ENCODE measurements at regions of chr19 and their contacts with region 1.

Region 1: DNA sequence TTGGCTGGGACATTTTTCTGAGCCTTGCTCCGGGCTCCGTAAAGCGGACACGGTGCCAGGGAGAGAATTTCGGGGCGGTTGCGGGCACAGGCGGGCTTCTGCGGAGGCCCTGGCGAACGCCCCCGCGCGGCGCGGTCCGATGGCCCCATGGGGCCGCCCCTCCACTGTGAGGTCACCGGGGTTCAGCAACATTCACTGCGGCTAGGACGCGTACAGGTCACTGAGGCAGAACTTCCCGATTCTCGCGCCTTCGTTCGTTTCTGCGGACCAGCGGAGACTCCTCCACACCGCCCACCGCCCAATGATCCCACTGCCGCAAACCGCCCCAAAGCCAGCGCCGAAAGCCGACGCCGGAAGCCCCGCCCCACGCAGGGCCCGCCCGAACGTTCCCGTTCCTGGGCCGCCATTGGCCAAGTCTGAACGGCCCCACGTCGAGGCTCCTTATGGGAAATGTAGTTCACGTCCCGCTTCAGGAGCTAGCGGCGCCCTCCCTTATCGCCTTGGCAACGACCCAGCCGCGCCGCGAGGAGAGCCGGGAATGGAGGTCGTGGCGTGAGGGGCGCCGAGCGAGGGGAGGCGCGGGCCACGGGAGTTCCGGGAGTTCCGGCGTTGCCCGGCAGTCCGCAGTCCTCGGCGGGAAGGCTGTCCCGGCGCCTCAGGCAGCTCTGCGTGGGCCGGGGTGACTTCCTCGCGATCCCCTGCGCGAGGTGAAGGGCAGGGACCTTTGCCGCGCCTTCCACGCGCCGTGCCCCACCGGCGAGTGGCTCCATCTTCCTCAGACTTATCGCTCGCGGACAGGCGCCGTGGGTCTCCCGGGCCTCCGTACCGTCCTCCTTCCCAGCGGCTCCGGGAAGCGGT is at the start of gene ZNF584:
- DNase-seq: peak; percentile 85 to 96 (median 92)
- ATAC-seq: peak; percentile 98
- H3K4me3 ChIP-seq: peak within 1 kb of the TSS; percentile 92
- H3K4me3 Mint-ChIP-seq: peak within 1 kb of the TSS; percentile 99
- H3K27ac ChIP-seq: peak within 1 kb of the TSS; percentile 70 to 77
- H3K27ac Mint-ChIP-seq: peak within 1 kb of the TSS; percentile 94
- H3K4me1 ChIP-seq: peaks cover 27% of the 10 kb centered on the region
- H3K4me1 Mint-ChIP-seq: peaks cover 39% of the 10 kb centered on the region
- H3K27me3 ChIP-seq: no peaks in the 10 kb centered on the region
- H3K27me3 Mint-ChIP-seq: no peaks in the 10 kb centered on the region
- CTCF ChIP-seq: no peak
- total RNA-seq, gene ZNF584: 1.7 to 1.8 TPM

Region 2: GRCh38 chr19:58362272-58362994 is 45.9 kb before region 1 on chr19 and contains the start of gene ZNF497:
- CTCF ChIA-PET with region 1: no interaction called
- POLR2A ChIA-PET with region 1: interaction called, 15 read pairs
- intact Hi-C with region 1: no loop called
- DNase-seq: peak; percentile 92 to 99 (median 97)
- ATAC-seq: peak; percentile 90
- H3K4me3 ChIP-seq: peak within 1 kb of the TSS; percentile 84
- H3K4me3 Mint-ChIP-seq: peak within 1 kb of the TSS; percentile 94
- H3K27ac ChIP-seq: peak within 1 kb of the TSS; percentile 58 to 69
- H3K27ac Mint-ChIP-seq: peak within 1 kb of the TSS; percentile 84
- H3K4me1 ChIP-seq: peaks cover 22% of the 10 kb centered on the region
- H3K4me1 Mint-ChIP-seq: peaks cover 12% of the 10 kb centered on the region
- H3K27me3 ChIP-seq: no peaks in the 10 kb centered on the region
- H3K27me3 Mint-ChIP-seq: no peaks in the 10 kb centered on the region
- CTCF ChIP-seq: no peak
- total RNA-seq, gene ZNF497: 0.28 to 0.55 TPM

Region 3: GRCh38 chr19:58380722-58381466 is 27.5 kb before region 1 on chr19 and contains the start of gene ZNF837:
- CTCF ChIA-PET with region 1: no interaction called
- POLR2A ChIA-PET with region 1: interaction called, 7 read pairs
- intact Hi-C with region 1: loop called in 1 of 2 experiments (anchors 1 kb)
- DNase-seq: peak; percentile 93 to 100 (median 97)
- ATAC-seq: peak; percentile 83
- H3K4me3 ChIP-seq: peak within 1 kb of the TSS; percentile 82
- H3K4me3 Mint-ChIP-seq: peak within 1 kb of the TSS; percentile 92
- H3K27ac ChIP-seq: peak within 1 kb of the TSS; percentile 81 to 92
- H3K27ac Mint-ChIP-seq: peak within 1 kb of the TSS; percentile 86
- H3K4me1 ChIP-seq: peaks cover 43% of the 10 kb centered on the region
- H3K4me1 Mint-ChIP-seq: peaks cover 33% of the 10 kb centered on the region
- H3K27me3 ChIP-seq: no peaks in the 10 kb centered on the region
- H3K27me3 Mint-ChIP-seq: no peaks in the 10 kb centered on the region
- CTCF ChIP-seq: no peak
- total RNA-seq, gene ZNF837: 0.71 to 1.0 TPM

Region 4: GRCh38 chr19:58386576-58387337 is 21.6 kb before region 1 on chr19 and contains the start of gene RPS5:
- CTCF ChIA-PET with region 1: no interaction called
- POLR2A ChIA-PET with region 1: interaction called, 7 read pairs
- intact Hi-C with region 1: loop called (anchors 1 kb)
- DNase-seq: peak; percentile 90 to 100 (median 95)
- ATAC-seq: peak; percentile 90
- H3K4me3 ChIP-seq: peak within 1 kb of the TSS; percentile 79
- H3K4me3 Mint-ChIP-seq: peak within 1 kb of the TSS; percentile 99
- H3K27ac ChIP-seq: peak within 1 kb of the TSS; percentile 93 to 97
- H3K27ac Mint-ChIP-seq: peak within 1 kb of the TSS; percentile 98
- H3K4me1 ChIP-seq: peaks cover 53% of the 10 kb centered on the region
- H3K4me1 Mint-ChIP-seq: peaks cover 47% of the 10 kb centered on the region
- H3K27me3 ChIP-seq: no peaks in the 10 kb centered on the region
- H3K27me3 Mint-ChIP-seq: no peaks in the 10 kb centered on the region
- CTCF ChIP-seq: no peak
- total RNA-seq, gene RPS5: 1,619 to 1,646 TPM

Region 5: DNA sequence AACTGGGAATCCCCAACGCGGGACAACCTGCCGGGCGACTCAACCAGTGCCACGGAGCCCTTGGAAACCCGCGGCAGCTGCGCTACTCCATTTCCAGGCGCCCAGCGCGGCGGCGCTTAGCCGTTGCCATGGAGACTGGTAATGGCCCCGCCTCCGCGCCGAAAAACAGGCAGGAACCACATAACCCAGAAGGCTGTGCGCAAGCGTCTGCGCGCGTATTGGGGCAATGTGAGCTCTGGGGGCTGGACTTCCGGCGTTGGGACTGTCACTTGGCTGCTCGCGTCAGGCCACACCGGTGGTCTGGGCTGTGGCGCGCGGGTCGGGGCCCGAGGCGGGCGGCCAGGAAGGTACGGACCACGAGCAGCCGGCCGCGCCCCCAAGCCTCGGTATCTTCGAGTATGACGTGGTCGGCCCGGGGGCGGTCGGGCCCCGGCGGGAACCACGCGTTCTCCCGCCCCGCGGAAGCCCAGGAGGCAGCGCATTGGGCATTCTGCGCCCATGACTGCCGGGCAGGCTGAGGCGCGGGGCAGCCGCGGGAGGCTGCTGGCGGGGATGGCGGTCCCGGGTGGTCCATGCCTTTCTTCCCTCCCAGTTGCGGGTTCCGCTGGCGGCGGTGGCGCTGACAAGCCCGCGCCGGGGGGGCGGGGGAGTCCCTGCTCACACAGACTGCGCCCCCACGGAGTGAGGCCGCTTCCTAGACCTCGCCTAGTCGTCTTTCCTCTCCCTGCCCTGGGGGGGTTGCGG is 43.1 kb after region 1 on chr19 and contains the start of gene ZNF324B:
- CTCF ChIA-PET with region 1: no interaction called
- POLR2A ChIA-PET with region 1: no interaction called
- intact Hi-C with region 1: loop called (anchors 1 to 2 kb)
- DNase-seq: peak; percentile 92 to 98 (median 96)
- ATAC-seq: peak; percentile 97
- H3K4me3 ChIP-seq: peak within 1 kb of the TSS; percentile 66
- H3K4me3 Mint-ChIP-seq: peak within 1 kb of the TSS; percentile 85
- H3K27ac ChIP-seq: peak within 1 kb of the TSS in 1 of 2 donors; percentile 61
- H3K27ac Mint-ChIP-seq: peak within 1 kb of the TSS; percentile 63
- H3K4me1 ChIP-seq: peaks cover 15% of the 10 kb centered on the region
- H3K4me1 Mint-ChIP-seq: peaks cover 21% of the 10 kb centered on the region
- H3K27me3 ChIP-seq: peaks cover 9 to 16% of the 10 kb centered on the region in 2 experiments
- H3K27me3 Mint-ChIP-seq: peaks cover 28% of the 10 kb centered on the region
- CTCF ChIP-seq: no peak
- total RNA-seq, gene ZNF324B: 6.3 to 7.6 TPM

Region 6: DNA sequence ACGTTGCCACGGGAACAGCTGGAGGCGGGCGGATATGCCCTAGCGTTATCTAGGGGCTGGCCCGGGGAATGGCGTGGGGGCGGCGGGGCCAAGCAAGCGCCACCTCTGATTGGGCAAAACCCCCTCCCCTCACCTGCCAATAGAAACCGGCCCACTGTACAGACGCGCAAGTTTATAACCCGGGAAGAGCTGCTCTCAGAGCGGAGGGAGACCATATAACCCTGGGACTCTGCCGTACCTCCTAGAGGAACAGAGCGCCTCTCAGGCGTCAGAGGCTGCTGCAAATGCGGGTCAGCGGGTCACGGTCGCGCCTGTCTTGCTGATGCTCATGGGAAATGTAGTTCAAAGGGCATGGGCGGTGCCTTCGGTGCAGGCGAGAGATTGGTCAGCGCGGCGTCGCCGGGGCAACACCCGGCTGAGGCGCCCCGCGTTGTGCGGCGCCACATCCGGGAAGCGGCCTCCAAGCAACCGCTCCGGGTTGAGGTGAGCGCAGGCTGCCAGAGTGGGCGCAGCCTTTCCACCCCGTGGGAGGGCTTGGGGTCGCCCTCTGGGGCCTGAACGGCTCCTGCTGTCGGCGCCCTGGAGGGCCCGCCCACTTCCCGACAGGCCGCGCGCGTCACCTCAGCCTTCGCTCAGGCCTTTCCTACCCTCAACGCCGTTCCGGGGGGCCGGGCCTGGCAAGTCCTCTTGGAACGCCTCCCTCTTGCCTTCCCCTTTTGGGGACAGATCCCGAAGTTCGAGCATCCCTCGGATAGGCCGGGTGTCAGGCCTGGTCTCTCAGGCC is 67.5 kb after region 1 on chr19 and contains the start of gene ZNF446:
- CTCF ChIA-PET with region 1: no interaction called
- POLR2A ChIA-PET with region 1: interaction called, 4 read pairs
- intact Hi-C with region 1: loop called in 1 of 2 experiments (anchors 2 kb)
- DNase-seq: peak; percentile 90 to 99 (median 94)
- ATAC-seq: peak; percentile 82
- H3K4me3 ChIP-seq: peak within 1 kb of the TSS; percentile 87
- H3K4me3 Mint-ChIP-seq: peak within 1 kb of the TSS; percentile 90
- H3K27ac ChIP-seq: peak within 1 kb of the TSS; percentile 76 to 95
- H3K27ac Mint-ChIP-seq: peak within 1 kb of the TSS; percentile 95
- H3K4me1 ChIP-seq: peaks cover 22% of the 10 kb centered on the region
- H3K4me1 Mint-ChIP-seq: peaks cover 23% of the 10 kb centered on the region
- H3K27me3 ChIP-seq: no peaks in the 10 kb centered on the region
- H3K27me3 Mint-ChIP-seq: no peaks in the 10 kb centered on the region
- CTCF ChIP-seq: no peak
- total RNA-seq, gene ZNF446: 13.6 to 14.6 TPM

Measured in CD4-positive, alpha-beta T cell (primary cell).